Heart right ventricle (tissue), 16 donors: ENCODE measurements at regions of chr11 and their contacts with region 1.

Region 1: GRCh38 chr11:57712256-57713150 is at the start of gene TMX2:
- DNase-seq: peak; percentile 88 to 95
- ATAC-seq: peak; percentile 97 to 98 (median 97)
- H3K4me3 ChIP-seq: peak within 1 kb of the TSS; percentile 73 to 100 (median 90)
- H3K27ac ChIP-seq: peak within 1 kb of the TSS; percentile 75 to 95 (median 90)
- H3K4me1 ChIP-seq: peaks cover 7 to 55% (median 38%) of the 10 kb centered on the region in 9 donors
- H3K27me3 ChIP-seq: no peaks in the 10 kb centered on the region
- CTCF ChIP-seq: peak in 1 of 9 donors; percentile 1
- total RNA-seq, gene TMX2: 58.7 to 103 (median 69.0) TPM

Region 2: DNA sequence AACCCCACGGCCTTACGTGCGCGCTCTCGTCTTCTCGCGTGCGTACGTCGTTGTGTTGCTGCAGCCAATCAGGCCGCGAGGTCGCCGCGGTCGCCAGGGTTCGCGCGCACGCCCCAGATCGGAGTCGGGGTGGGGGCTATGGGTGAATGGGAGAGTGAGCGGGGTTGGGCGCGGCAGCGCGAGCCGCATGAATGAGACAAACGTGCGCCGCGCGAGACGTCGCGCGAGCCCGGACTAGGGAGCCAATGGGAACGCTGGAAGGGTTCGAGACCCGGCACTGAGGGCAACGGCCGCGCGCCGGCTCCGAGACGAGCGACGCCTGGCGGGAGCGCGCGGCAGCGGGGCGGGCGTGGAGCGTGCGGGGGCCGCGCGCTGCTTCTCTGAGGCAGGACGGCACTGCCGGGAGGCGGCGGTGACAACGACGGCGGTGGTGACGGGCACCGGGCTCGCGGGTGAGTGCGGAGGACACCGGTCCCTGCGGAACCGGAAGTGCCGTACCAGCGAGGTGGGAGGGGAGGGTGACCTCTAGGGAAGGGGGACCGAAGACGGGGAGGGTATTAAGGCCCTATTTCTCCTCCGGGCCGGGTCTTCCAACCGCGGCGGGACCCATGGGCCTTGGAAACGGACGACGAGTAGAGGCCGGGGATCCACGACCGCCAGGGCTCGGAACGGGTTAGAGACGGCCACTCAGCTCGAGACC is 44.6 kb before region 1 on chr11 and contains the start of gene ZDHHC5:
- intact Hi-C with region 1: loop called in 5 of 10 experiments (anchors 1 to 5 kb)
- DNase-seq: peak; percentile 99
- ATAC-seq: peak; percentile 94 to 97 (median 97)
- H3K4me3 ChIP-seq: peak within 1 kb of the TSS; percentile 75 to 100 (median 82)
- H3K27ac ChIP-seq: peak within 1 kb of the TSS; percentile 87 to 99 (median 97)
- H3K4me1 ChIP-seq: peaks cover 0 to 43% (median 27%) of the 10 kb centered on the region in 9 donors
- H3K27me3 ChIP-seq: no peaks in the 10 kb centered on the region
- CTCF ChIP-seq: peak; percentile 3 to 76 (median 62)
- total RNA-seq, gene ZDHHC5: 32.6 to 56.5 (median 41.6) TPM

Region 3: GRCh38 chr11:57674251-57674650 is 38.3 kb before region 1 on chr11:
- intact Hi-C with region 1: loop called in 4 of 10 experiments (anchors 5 kb)
- DNase-seq: no peak
- ATAC-seq: no peak
- H3K4me3 ChIP-seq: no peak overlapping the region
- H3K27ac ChIP-seq: no peak overlapping the region
- H3K4me1 ChIP-seq: peaks cover 0 to 41% (median 20%) of the 10 kb centered on the region in 9 donors
- H3K27me3 ChIP-seq: no peaks in the 10 kb centered on the region
- CTCF ChIP-seq: no peak

Region 4: DNA sequence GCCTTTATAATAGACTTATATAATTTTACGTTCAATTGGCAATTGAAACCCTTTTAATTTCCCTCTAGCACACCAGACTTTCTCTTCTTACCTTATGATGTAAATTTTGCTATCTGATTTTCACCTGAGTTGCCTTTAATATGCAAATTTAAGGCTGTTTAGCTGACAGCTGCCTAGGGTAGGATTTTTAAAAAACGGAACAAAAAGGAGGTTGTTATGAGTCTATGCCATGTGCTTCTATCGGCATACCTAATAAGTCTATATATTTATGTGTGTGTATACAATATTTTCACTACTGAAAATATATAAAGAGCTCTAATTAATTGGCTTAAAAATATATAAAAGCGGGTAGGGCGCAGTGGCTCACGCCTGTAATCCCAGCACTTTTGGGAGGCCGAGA is 17.0 kb after region 1 on chr11:
- intact Hi-C with region 1: no loop called
- DNase-seq: no peak
- ATAC-seq: no peak
- H3K4me3 ChIP-seq: no peak overlapping the region
- H3K27ac ChIP-seq: no peak overlapping the region
- H3K4me1 ChIP-seq: peaks cover 0 to 10% (median 4%) of the 10 kb centered on the region in 9 donors
- H3K27me3 ChIP-seq: no peaks in the 10 kb centered on the region
- CTCF ChIP-seq: no peak

Region 5: GRCh38 chr11:57741132-57742086 is 28.9 kb after region 1 on chr11 and contains the start of gene SELENOH:
- intact Hi-C with region 1: loop called in 1 of 10 experiments (anchors 1 kb)
- DNase-seq: peak; percentile 93 to 95
- ATAC-seq: peak; percentile 97 to 99 (median 98)
- H3K4me3 ChIP-seq: peak within 1 kb of the TSS; percentile 69 to 95 (median 84)
- H3K27ac ChIP-seq: peak within 1 kb of the TSS; percentile 90 to 99 (median 96)
- H3K4me1 ChIP-seq: peaks cover 2 to 32% (median 23%) of the 10 kb centered on the region in 9 donors
- H3K27me3 ChIP-seq: no peaks in the 10 kb centered on the region
- CTCF ChIP-seq: peak in 1 of 9 donors; percentile 8
- total RNA-seq, gene SELENOH: 69.8 to 99.0 (median 77.5) TPM